ENCODE measurements at regions of chr17 and their contacts with region 1.

Region 1: DNA sequence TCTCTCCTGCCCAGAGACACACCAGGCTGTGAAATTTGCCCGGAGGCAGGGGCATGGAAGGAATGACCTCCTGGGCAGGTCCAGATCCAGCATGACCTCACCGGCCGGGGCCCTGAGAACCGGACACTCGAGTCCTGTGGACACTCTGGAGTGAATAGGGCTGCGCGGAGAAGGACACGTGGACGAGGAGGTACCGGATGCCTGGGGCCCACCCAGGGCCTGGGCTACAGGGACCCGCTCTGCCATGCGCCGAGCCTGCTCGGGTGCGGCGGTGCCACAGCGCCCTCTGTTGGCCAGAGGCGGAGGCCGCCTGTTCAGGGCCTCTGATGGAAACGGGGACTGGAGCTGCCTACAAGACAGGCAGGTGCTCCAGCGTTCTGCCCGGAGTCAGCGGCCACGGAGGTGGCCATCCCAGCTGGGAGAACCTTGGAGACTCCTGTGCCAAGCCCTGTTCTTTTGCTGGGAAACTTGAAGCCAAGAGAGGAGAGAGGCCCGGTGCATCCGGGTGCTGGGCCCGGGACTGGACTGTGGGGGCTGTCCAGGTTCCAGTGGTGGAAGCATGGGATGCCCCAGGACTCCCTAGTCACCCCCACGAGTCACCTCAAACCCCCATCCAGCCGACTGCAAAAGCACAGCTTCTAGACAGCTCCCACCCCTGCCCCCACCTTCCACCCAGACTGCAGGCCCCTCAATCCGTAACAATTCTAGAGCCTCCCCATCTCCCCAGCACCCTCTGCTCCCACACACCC is 19.3 kb upstream of the NXPH3 start:
- DNase-seq: peak; percentile 82 to 94
- ATAC-seq: peak; percentile 89 to 98
- H3K4me3 ChIP-seq: no peak overlapping the region
- H3K27ac ChIP-seq: peak overlapping the region; percentile 46 to 64
- H3K4me1 ChIP-seq: 0 out of 3 replicates have a peak, but pooled peaks cover 3% of the 10 kb centered on the region
- CTCF ChIP-seq: peak; percentile 99
- EP300 ChIP-seq: no peak
- POLR2A ChIP-seq: no peak; the same call in 1 of the 2 replicates
- RAD21 ChIP-seq: peak; percentile 97 to 98

Region 2: DNA sequence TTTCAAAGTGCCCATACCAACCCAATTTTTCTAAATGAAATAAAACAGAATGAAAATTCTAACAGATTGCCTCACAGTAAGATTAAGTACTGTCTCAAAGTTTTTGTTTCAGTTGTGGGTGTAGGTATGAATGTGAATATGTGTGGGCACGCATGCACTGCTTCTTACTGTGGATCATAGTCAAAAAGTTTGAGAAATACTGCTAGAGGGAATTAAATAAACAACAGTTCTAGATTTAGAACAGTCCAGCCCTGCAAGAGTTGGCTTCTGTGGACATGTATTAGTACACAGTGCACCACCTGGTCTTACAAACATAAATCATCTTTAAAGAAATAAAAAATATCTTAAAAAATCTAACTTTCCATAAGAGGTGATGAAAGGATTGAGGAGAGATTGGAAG is 202.8 kb before region 1 on chr17:
- CTCF ChIA-PET with region 1: interaction called, 10 read pairs
- POLR2A ChIA-PET with region 1: no interaction called
- DNase-seq: no peak
- ATAC-seq: no peak
- H3K4me3 ChIP-seq: no peak overlapping the region
- H3K27ac ChIP-seq: no peak overlapping the region
- H3K4me1 ChIP-seq: peaks cover 2% of the 10 kb centered on the region; the same call in 1 of the 3 replicates
- CTCF ChIP-seq: no peak
- EP300 ChIP-seq: no peak
- POLR2A ChIP-seq: no peak
- RAD21 ChIP-seq: no peak

Region 3: GRCh38 chr17:49425004-49425286 is 131.5 kb before region 1 on chr17:
- CTCF ChIA-PET with region 1: interaction called, 317 read pairs
- POLR2A ChIA-PET with region 1: no interaction called
- DNase-seq: no peak
- ATAC-seq: no peak
- H3K4me3 ChIP-seq: no peak overlapping the region
- H3K27ac ChIP-seq: no peak overlapping the region
- H3K4me1 ChIP-seq: no peaks in the 10 kb centered on the region
- CTCF ChIP-seq: no peak
- EP300 ChIP-seq: no peak
- POLR2A ChIP-seq: no peak
- RAD21 ChIP-seq: no peak

Region 4: DNA sequence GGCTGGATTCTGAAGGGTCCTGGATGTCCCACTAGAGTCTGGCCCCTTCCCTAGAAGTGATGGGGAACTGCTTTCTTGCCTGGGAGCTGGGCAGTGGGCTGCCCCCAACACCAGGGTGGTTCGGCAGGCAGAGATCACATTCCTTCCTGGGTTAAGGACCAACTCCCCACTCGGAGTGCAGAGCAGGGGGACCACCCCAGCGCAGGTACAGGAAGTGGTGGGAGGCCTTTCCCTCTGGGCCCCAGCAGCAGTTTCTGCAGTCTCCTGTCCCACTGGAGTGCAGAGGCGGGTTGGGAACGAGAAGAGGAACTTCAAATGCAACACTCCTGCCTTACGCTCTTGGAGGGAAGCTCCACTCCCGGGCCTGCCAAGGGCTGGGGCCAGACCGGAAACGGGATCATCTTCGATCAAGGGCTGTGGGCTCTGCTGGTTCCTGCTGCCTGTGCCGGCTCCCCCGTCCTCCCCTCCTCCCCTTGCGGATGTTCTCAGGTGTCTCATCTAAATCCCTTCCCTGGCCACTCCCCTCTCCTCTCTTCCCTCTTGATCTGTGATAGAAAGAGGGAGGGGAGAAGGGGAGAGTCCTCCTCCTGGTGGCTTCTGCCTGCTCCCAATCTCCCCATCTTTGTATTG is 70.3 kb before region 1 on chr17:
- CTCF ChIA-PET with region 1: interaction called, 64 read pairs
- POLR2A ChIA-PET with region 1: no interaction called
- DNase-seq: no peak
- ATAC-seq: no peak
- H3K4me3 ChIP-seq: no peak overlapping the region
- H3K27ac ChIP-seq: no peak overlapping the region
- H3K4me1 ChIP-seq: peaks cover 8% of the 10 kb centered on the region
- CTCF ChIP-seq: no peak
- EP300 ChIP-seq: no peak
- POLR2A ChIP-seq: no peak
- RAD21 ChIP-seq: no peak

Region 5: GRCh38 chr17:49567871-49568694 is 11.7 kb after region 1 on chr17:
- CTCF ChIA-PET with region 1: interaction called, 258 read pairs
- POLR2A ChIA-PET with region 1: no interaction called
- DNase-seq: peak; percentile 78 to 92
- ATAC-seq: peak; percentile 63 to 84
- H3K4me3 ChIP-seq: peak overlapping the region; percentile 48
- H3K27ac ChIP-seq: peak overlapping the region; percentile 61 to 82; a peak in 5 of 6 replicates
- H3K4me1 ChIP-seq: no peaks in the 10 kb centered on the region; the same call in 2 of the 3 replicates
- CTCF ChIP-seq: peak; percentile 97
- EP300 ChIP-seq: no peak
- POLR2A ChIP-seq: no peak
- RAD21 ChIP-seq: peak; percentile 99

Region 6: GRCh38 chr17:49687878-49688491 is 131.6 kb after region 1 on chr17:
- CTCF ChIA-PET with region 1: interaction called, 2,008 read pairs
- POLR2A ChIA-PET with region 1: interaction called, 10 read pairs
- DNase-seq: no peak
- ATAC-seq: 0 out of 6 replicates have a peak, but pooled peaks of 1 of the 2 experiments have one; percentile 15
- H3K4me3 ChIP-seq: no peak overlapping the region
- H3K27ac ChIP-seq: peak overlapping the region in 1 of 2 experiments; percentile 9; a peak in 1 of 6 replicates
- H3K4me1 ChIP-seq: 0 out of 3 replicates have a peak, but pooled peaks cover 4% of the 10 kb centered on the region
- CTCF ChIP-seq: no peak
- EP300 ChIP-seq: no peak
- POLR2A ChIP-seq: no peak
- RAD21 ChIP-seq: no peak

Region 7: DNA sequence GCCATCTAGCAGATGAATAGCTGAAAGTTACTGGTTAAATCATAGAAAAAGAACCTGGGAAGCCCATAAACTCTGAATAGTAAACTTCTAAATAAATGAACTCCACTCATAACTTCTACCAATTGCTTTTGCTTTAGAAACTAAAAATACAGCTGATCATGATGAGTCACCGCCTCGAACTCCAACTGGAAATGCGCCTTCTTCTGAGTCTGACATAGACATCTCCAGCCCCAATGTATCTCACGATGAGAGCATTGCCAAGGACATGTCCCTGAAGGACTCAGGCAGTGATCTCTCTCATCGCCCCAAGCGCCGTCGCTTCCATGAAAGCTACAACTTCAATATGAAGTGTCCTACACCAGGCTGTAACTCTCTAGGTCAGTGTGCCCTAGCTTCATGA is 241.8 kb after region 1 on chr17:
- CTCF ChIA-PET with region 1: interaction called, 10 read pairs
- POLR2A ChIA-PET with region 1: no interaction called
- DNase-seq: no peak
- ATAC-seq: no peak
- H3K4me3 ChIP-seq: no peak overlapping the region
- H3K27ac ChIP-seq: no peak overlapping the region
- H3K4me1 ChIP-seq: no peaks in the 10 kb centered on the region
- CTCF ChIP-seq: no peak
- EP300 ChIP-seq: no peak
- POLR2A ChIP-seq: no peak
- RAD21 ChIP-seq: no peak

Region 8: DNA sequence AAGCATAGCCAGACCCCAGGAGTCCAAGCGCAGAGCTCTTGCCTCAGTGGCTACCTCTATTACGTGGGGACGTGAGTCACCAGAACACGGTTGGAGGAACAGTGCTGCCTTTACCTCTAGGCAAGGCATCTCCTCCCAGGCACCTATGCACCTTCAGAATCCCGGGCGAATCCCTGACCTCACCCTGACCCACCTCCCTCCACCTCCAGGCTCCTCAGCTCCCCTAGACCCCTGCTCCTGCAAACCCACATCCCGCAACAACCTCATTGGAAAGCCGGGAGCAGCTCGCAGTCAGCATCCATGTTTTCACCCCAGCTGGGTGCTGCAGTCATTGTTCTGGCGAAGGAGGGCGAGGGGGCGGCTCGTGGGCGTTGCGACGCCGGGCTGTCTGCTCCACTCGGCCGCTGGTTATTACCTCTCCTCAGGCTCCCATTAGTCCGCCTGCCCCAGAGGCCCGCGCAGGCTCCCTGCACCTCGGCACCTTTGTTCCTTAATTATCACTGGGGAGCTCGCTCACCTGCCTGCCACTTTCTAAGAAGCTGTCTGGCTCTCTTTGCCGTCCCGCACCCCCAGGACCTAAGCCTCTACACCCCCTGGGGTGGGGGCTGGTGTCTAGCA is 388.0 kb after region 1 on chr17:
- CTCF ChIA-PET with region 1: no interaction called
- POLR2A ChIA-PET with region 1: no interaction called
- DNase-seq: no peak
- ATAC-seq: no peak
- H3K4me3 ChIP-seq: no peak overlapping the region
- H3K27ac ChIP-seq: no peak overlapping the region
- H3K4me1 ChIP-seq: no peaks in the 10 kb centered on the region
- CTCF ChIP-seq: no peak
- EP300 ChIP-seq: no peak
- POLR2A ChIP-seq: no peak
- RAD21 ChIP-seq: no peak